AG04449 (cell line): ENCODE measurements at regions of chr1 and their contacts with region 1.

Region 1: DNA sequence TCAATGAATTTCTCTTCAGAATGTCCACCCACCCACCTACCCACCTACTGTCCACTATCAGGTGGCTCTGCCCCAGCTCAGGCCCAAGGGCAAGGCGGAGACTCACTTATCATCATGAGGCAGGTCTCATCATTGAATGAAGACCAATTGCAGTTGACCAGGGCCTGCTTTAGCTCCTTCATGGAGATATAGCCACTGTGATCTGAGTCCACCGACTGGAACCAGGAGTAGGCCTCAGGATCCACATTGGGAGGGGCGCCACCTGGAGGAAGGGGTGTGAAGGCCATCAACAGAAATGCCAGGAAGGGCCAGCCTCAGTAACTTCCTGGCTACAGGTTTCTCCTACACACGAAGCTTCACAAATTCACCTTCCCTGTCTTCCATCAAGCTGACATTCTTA is 11.6 kb downstream of the PEF1 start:
- DNase-seq: no peak
- H3K4me3 ChIP-seq: no peak overlapping the region
- CTCF ChIP-seq: peak; percentile 45

Region 2: GRCh38 chr1:31605908-31606427 is 27.1 kb before region 1 on chr1:
- CTCF ChIA-PET with region 1: no interaction called
- POLR2A ChIA-PET with region 1: no interaction called
- DNase-seq: no peak
- H3K4me3 ChIP-seq: no peak overlapping the region
- CTCF ChIP-seq: no peak

Region 3: DNA sequence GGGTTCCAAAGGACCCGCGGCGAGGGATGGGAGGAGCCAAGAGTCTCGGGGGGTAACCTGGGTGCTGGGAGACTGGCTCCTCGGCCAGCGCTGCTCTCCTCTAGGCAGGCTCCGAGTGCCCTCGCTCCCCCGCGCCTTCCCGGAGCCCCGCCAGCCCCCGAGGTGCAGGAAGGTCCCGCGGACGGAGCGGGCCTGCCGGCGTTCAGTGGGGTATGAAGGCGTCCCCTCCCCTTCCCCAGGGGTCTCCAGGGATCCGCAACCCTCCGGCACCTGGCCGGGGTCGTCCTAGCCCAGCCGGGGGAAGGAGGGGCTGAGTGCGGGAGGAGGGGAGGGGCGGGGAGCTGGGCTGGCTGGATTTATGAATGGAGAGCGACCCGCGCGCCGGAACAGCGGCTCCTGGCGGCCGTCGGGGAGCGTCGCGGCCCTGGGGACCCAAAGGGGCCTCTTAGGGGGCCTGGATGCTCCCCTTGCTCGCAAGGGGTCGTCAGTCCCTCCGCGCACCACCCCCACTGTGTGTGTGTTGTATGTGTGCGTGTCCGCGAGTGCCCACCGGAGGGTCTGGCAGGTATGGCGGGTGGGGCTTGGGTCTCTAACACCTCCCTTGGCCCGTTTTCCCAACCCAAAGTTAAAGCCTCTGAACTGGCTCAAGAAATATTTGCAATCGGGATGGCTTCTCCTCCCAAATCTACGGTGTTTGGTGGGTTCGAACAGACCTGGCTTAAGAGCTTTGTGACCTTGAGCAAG is 15.0 kb before region 1 on chr1:
- CTCF ChIA-PET with region 1: interaction called, 58 read pairs
- POLR2A ChIA-PET with region 1: no interaction called
- DNase-seq: no peak
- H3K4me3 ChIP-seq: peak overlapping the region; percentile 54
- CTCF ChIP-seq: peak; percentile 87

Region 4: GRCh38 chr1:31644560-31645273 is 11.7 kb after region 1 on chr1 and contains the start of gene PEF1:
- CTCF ChIA-PET with region 1: interaction called, 22 read pairs
- POLR2A ChIA-PET with region 1: interaction called, 4 read pairs
- DNase-seq: peak; percentile 82
- H3K4me3 ChIP-seq: peak within 1 kb of the TSS; percentile 98
- CTCF ChIP-seq: no peak